Heart right ventricle (tissue), 16 donors: ENCODE measurements at regions of chr1 and their contacts with region 1.

Region 1: GRCh38 chr1:68120136-68120791 is 69.8 kb upstream of the DIRAS3 start:
- DNase-seq: peak in 1 of 2 donors; percentile 63
- ATAC-seq: peak in 7 of 8 donors; percentile 39 to 81 (median 65)
- H3K4me3 ChIP-seq: no peak overlapping the region
- H3K27ac ChIP-seq: peak overlapping the region in 1 of 10 donors; percentile 22
- H3K4me1 ChIP-seq: peaks cover 0 to 8% (median 3%) of the 10 kb centered on the region in 9 donors
- H3K27me3 ChIP-seq: no peaks in the 10 kb centered on the region
- CTCF ChIP-seq: peak; percentile 69 to 91 (median 82)

Region 2: GRCh38 chr1:67535474-67535873 is 584.8 kb before region 1 on chr1:
- intact Hi-C with region 1: loop called in 2 of 10 experiments (anchors 10 kb)
- DNase-seq: peak; percentile 72 to 73
- ATAC-seq: peak in 7 of 8 donors; percentile 72 to 88 (median 79)
- H3K4me3 ChIP-seq: no peak overlapping the region
- H3K27ac ChIP-seq: no peak overlapping the region
- H3K4me1 ChIP-seq: peaks cover 0 to 14% (median 9%) of the 10 kb centered on the region in 9 donors
- H3K27me3 ChIP-seq: no peaks in the 10 kb centered on the region
- CTCF ChIP-seq: peak; percentile 63 to 93 (median 89)

Region 3: GRCh38 chr1:67766141-67766978 is 353.9 kb before region 1 on chr1:
- intact Hi-C with region 1: loop called in 3 of 10 experiments (anchors 5 to 10 kb)
- DNase-seq: peak; percentile 21 to 32
- ATAC-seq: peak; percentile 57 to 82 (median 67)
- H3K4me3 ChIP-seq: peak overlapping the region in 6 of 10 donors; percentile 23 to 36 (median 34)
- H3K27ac ChIP-seq: peak overlapping the region in 3 of 10 donors; percentile 14 to 56 (median 29)
- H3K4me1 ChIP-seq: peaks cover 0 to 21% (median 13%) of the 10 kb centered on the region in 9 donors
- H3K27me3 ChIP-seq: no peaks in the 10 kb centered on the region
- CTCF ChIP-seq: peak; percentile 64 to 81 (median 73)

Region 4: GRCh38 chr1:68173911-68174737 is 53.9 kb after region 1 on chr1:
- intact Hi-C with region 1: loop called in 1 of 10 experiments (anchors 10 kb)
- DNase-seq: peak; percentile 23 to 78
- ATAC-seq: peak; percentile 62 to 81 (median 76)
- H3K4me3 ChIP-seq: peak overlapping the region in 6 of 10 donors; percentile 0 to 8 (median 4)
- H3K27ac ChIP-seq: peak overlapping the region; percentile 25 to 88 (median 73)
- H3K4me1 ChIP-seq: peaks cover 12 to 75% (median 55%) of the 10 kb centered on the region in 9 donors
- H3K27me3 ChIP-seq: no peaks in the 10 kb centered on the region
- CTCF ChIP-seq: no peak

Region 5: GRCh38 chr1:68313735-68314134 is 193.5 kb after region 1 on chr1:
- intact Hi-C with region 1: loop called in 1 of 10 experiments (anchors 10 kb)
- DNase-seq: no peak
- ATAC-seq: no peak
- H3K4me3 ChIP-seq: no peak overlapping the region
- H3K27ac ChIP-seq: no peak overlapping the region
- H3K4me1 ChIP-seq: peaks cover 0 to 11% (median 0%) of the 10 kb centered on the region in 9 donors
- H3K27me3 ChIP-seq: no peaks in the 10 kb centered on the region
- CTCF ChIP-seq: no peak

Region 6: DNA sequence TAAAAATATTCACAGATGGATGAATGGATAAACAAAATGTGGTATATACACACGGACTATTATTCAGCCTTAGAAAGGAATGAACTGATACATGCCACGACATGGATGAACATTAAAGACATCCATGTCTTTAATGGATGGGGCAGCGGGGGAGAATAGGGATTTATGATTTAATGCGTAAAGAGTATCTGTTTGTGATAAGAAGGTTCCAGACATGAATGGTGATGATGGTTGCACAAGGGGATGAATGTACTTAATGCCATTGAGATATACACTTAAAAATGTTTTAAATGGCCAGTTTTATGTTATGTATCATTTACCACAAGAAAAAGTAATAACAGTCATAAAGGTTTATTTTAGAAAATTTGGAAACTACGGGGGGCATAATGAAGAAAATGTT is 220.7 kb after region 1 on chr1:
- intact Hi-C with region 1: loop called (anchors 1 to 10 kb)
- DNase-seq: no peak
- ATAC-seq: no peak
- H3K4me3 ChIP-seq: no peak overlapping the region
- H3K27ac ChIP-seq: no peak overlapping the region
- H3K4me1 ChIP-seq: peaks cover 0 to 20% (median 0%) of the 10 kb centered on the region in 9 donors
- H3K27me3 ChIP-seq: peaks cover 0 to 3% (median 0%) of the 10 kb centered on the region in 7 donors
- CTCF ChIP-seq: no peak

Region 7: GRCh38 chr1:68442822-68443556 is 322.7 kb after region 1 on chr1:
- intact Hi-C with region 1: loop called in 6 of 10 experiments (anchors 2 to 10 kb)
- DNase-seq: peak in 1 of 2 donors; percentile 32
- ATAC-seq: peak in 5 of 8 donors; percentile 23 to 63 (median 52)
- H3K4me3 ChIP-seq: no peak overlapping the region
- H3K27ac ChIP-seq: no peak overlapping the region
- H3K4me1 ChIP-seq: no peaks in the 10 kb centered on the region
- H3K27me3 ChIP-seq: no peaks in the 10 kb centered on the region
- CTCF ChIP-seq: peak; percentile 19 to 63 (median 56)